AG04449 (cell line): ENCODE measurements at regions of chr15 and their contacts with region 1.

Region 1: DNA sequence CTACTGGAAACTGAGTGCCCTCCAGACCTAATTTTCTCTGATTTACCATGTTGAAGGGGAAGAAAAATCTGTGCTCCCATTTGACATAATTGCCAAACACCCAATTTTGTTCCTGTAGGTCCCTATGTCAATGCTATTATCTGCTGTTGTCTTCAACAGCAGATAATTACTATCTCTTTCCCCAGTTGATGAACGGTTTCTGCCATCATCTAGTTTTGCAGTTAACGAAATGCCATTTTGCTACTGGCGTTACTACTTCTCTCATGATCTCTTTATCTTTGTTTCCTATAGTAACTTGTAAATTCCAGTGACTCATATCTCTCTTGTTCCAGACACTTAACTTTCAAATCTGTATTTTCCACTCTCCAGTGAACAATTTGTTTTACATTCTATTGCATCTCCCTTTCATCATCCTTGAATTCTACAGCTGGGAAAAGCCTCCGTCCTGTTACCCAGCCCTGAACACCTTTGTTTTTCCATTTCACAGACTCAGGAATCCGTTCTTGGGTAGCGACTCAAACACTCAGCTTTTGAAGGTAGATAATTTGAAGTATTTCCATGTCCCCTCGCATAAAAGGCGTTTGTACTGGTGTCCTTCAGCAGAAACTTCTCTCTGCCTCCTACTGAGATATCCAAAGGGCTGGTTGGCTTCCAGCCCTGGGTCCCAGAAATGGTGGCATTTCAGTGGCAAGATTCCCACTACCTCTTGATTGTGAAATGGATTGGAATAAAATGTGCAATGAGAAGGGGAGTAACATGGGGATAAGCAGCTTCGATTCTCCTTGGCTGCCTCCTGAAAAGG is 111.7 kb downstream of the FOXB1 start:
- DNase-seq: no peak
- H3K4me3 ChIP-seq: no peak overlapping the region
- CTCF ChIP-seq: no peak

Region 2: GRCh38 chr15:60062826-60063225 is 53.0 kb before region 1 on chr15:
- CTCF ChIA-PET with region 1: no interaction called
- POLR2A ChIA-PET with region 1: no interaction called
- DNase-seq: no peak
- H3K4me3 ChIP-seq: no peak overlapping the region
- CTCF ChIP-seq: no peak

Region 3: DNA sequence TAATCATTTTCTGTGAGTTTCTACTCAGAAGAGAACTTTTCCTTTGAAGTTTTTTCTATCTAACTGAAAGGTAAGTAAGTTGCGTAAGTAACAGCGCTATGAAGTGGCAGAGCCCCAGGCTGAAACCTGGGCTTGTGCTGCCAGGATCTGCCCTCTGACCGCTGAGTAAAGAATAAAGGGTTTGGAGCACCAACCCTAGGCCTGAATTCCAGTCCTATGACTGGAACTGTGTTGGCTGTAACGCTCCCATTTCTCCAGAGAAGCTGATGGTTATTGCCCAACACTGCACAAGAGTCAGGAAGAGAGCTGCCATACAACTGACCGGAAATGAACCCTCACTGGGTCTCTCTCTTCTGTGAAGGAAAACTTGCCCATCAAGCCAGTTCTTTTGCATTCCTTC is 24.6 kb before region 1 on chr15:
- CTCF ChIA-PET with region 1: no interaction called
- POLR2A ChIA-PET with region 1: no interaction called
- DNase-seq: peak; percentile 38
- H3K4me3 ChIP-seq: no peak overlapping the region
- CTCF ChIP-seq: no peak

Region 4: GRCh38 chr15:60128000-60128376 is 12.2 kb after region 1 on chr15:
- CTCF ChIA-PET with region 1: interaction called, 11 read pairs
- POLR2A ChIA-PET with region 1: no interaction called
- DNase-seq: no peak
- H3K4me3 ChIP-seq: peak overlapping the region; percentile 63
- CTCF ChIP-seq: no peak